Endothelial cell of umbilical vein (primary cell): ENCODE measurements at regions of chr1 and their contacts with region 1.

Region 1: GRCh38 chr1:7070389-7071029 is 285.3 kb downstream of the CAMTA1 start:
- DNase-seq: peak; percentile 69
- H3K4me3 ChIP-seq: peak overlapping the region in 2 of 3 experiments; percentile 16 to 20
- H3K27ac ChIP-seq: no peak overlapping the region
- H3K4me1 ChIP-seq: peaks cover 4% of the 10 kb centered on the region
- H3K27me3 ChIP-seq: no peaks in the 10 kb centered on the region
- CTCF ChIP-seq: peak; percentile 73 to 95
- POLR2A ChIP-seq: no peak

Region 2: DNA sequence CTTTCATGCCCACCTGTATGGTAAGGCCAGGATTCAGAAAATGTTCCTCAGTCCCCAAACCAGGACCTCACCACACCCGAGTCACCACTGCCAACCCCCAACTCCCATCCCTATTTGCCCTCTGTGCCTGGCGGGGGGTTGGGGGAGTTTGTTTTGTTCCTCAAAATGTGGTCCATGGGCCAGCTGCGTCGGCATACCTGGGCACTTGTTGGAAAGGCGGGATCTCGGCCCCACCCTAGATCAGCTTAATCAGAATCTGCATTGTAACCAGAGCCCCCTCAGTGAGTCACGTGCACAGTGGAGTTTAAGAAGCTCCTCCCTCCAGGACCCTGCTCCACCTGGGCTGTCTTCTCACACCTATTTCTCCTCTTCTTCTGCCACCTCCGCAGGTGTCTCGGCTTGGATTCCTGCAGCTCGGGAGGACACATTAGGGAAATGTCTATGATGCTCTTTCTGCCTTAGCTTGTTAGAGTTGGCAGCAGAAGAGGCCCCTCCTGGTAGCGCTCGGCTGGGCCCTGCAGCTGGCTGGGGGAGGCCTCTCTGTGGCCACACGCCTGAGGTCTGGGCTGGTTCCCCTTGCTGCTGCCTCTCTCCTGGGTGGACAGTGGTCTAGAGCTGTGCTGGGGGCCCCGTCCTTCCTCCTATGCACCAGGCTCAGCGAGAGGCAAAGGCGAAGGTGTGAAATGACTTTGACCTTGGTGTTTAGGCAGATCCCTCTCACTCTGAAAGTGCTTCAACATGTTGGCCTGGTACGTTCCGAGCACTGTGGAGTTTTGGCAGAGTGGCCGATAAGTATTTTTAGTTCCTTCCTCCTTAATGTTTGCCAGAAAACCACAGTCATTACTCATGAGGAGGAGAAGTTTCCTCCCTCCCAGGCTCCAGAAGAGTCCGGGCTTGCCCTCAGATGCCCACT is 327.1 kb before region 1 on chr1:
- CTCF ChIA-PET with region 1: interaction called, 14 read pairs
- POLR2A ChIA-PET with region 1: no interaction called
- dilution Hi-C with region 1: no loop called
- intact Hi-C with region 1: no loop called
- DNase-seq: peak; percentile 65
- H3K4me3 ChIP-seq: no peak overlapping the region
- H3K27ac ChIP-seq: no peak overlapping the region
- H3K4me1 ChIP-seq: peaks cover 8% of the 10 kb centered on the region
- H3K27me3 ChIP-seq: no peaks in the 10 kb centered on the region
- CTCF ChIP-seq: no peak
- POLR2A ChIP-seq: no peak

Region 3: GRCh38 chr1:6889875-6890480 is 180.5 kb before region 1 on chr1:
- CTCF ChIA-PET with region 1: interaction called, 16 read pairs
- POLR2A ChIA-PET with region 1: no interaction called
- dilution Hi-C with region 1: no loop called
- intact Hi-C with region 1: loop called (anchors 1 kb)
- DNase-seq: peak; percentile 82
- H3K4me3 ChIP-seq: no peak overlapping the region
- H3K27ac ChIP-seq: no peak overlapping the region
- H3K4me1 ChIP-seq: no peaks in the 10 kb centered on the region
- H3K27me3 ChIP-seq: no peaks in the 10 kb centered on the region
- CTCF ChIP-seq: peak; percentile 76 to 88
- POLR2A ChIP-seq: no peak

Region 4: GRCh38 chr1:7042322-7043190 is 28.0 kb before region 1 on chr1:
- CTCF ChIA-PET with region 1: interaction called, 89 read pairs
- POLR2A ChIA-PET with region 1: no interaction called
- dilution Hi-C with region 1: no loop called
- intact Hi-C with region 1: no loop called
- DNase-seq: peak; percentile 31
- H3K4me3 ChIP-seq: no peak overlapping the region
- H3K27ac ChIP-seq: no peak overlapping the region
- H3K4me1 ChIP-seq: no peaks in the 10 kb centered on the region
- H3K27me3 ChIP-seq: no peaks in the 10 kb centered on the region
- CTCF ChIP-seq: peak; percentile 35 to 40
- POLR2A ChIP-seq: no peak